AG04449 (cell line): ENCODE measurements at regions of chr1 and their contacts with region 1.

Region 1: GRCh38 chr1:117284399-117285215 is 73.9 kb upstream of the VTCN1 start:
- DNase-seq: peak; percentile 37
- H3K4me3 ChIP-seq: no peak overlapping the region
- CTCF ChIP-seq: peak; percentile 51

Region 2: DNA sequence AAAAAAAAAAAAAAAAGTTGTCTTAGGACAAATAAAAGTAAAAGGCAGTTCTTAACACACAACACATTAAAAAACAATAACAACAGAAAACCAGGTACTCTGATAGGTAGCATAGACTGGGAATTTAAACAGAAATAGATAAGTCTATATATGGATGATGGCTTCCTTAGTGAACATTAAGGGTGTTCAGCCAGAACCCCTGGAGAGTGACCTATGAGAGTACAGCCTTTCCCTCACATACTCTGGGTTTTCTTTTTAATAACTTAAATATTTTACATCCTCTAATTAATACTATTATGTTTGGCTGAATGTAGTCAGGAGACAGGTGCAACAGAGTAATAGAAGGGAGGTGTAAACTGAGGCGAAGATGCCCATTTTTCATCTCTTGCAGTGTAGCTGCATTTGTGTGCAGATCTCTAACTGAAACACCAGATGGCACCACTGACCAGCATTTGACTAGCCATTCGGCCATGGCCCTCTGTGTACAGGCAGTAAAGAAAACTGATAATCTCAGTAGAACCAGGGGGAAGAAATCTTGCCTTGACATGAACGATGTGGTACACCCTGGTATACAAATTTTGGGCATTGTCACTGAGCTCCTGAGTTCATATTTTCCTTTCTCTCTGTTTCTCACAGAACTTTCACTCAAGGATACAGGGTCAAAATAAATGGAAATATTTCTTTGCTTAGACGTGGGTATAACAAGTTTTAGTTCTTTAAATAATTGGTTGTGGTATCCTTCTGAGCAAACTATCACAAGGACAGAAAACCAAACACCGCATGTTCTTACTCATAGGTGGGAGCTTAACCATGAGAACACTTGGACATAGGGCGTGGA is 216.9 kb before region 1 on chr1:
- CTCF ChIA-PET with region 1: interaction called, 340 read pairs
- POLR2A ChIA-PET with region 1: no interaction called
- DNase-seq: no peak
- H3K4me3 ChIP-seq: no peak overlapping the region
- CTCF ChIP-seq: peak; percentile 77

Region 3: GRCh38 chr1:117093870-117094621 is 190.6 kb before region 1 on chr1:
- CTCF ChIA-PET with region 1: interaction called, 18 read pairs
- POLR2A ChIA-PET with region 1: no interaction called
- DNase-seq: no peak
- H3K4me3 ChIP-seq: no peak overlapping the region
- CTCF ChIP-seq: peak; percentile 28

Region 4: GRCh38 chr1:117121776-117122697 is 162.6 kb before region 1 on chr1:
- CTCF ChIA-PET with region 1: interaction called, 61 read pairs
- POLR2A ChIA-PET with region 1: no interaction called
- DNase-seq: peak; percentile 77
- H3K4me3 ChIP-seq: peak overlapping the region; percentile 93
- CTCF ChIP-seq: peak; percentile 91

Region 5: DNA sequence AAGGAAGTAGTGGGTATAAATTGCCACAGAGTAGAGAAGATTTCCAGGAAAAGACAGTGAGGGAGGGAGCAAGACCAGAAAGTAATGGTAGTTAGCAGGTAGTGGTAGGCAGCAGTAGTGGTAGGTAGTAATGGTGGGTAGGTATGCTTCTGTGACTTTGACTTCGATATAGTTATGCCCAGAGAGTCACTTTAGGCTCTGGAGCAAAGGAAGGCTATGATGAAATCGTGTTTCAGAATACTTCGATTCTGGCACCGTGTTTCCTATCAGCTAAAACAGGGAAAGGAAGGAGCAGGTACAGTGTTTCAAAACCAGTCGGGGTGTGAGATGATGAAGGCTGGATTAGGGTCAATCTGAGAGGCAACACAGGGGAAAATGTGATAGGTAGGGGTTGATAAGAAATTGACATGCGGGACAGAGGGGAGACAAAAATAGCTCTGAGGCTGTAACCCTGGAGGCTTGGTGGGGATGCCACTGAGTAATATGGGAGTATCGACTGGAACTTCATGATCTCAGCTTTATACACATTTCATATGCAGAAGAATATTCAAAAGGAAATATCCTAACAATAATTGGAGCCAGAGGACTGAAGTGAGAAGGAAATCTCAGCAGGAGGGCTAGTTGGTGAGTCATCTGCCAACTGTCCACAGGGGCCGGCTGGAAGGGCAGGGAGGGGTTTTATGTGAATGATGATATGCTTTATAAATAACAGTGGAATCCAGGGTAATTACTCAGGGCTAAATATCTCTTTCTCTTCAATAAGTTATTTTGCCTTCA is 137.8 kb before region 1 on chr1:
- CTCF ChIA-PET with region 1: interaction called, 10 read pairs
- POLR2A ChIA-PET with region 1: no interaction called
- DNase-seq: peak; percentile 89
- H3K4me3 ChIP-seq: no peak overlapping the region
- CTCF ChIP-seq: no peak